MCF 10A (cell line): ENCODE measurements at regions of chr3 and their contacts with region 1.

Region 1: GRCh38 chr3:51391075-51391567 is at the start of gene RBM15B:
- DNase-seq: peak; percentile 95
- H3K4me3 Mint-ChIP-seq: peak within 1 kb of the TSS; percentile 71
- H3K27ac Mint-ChIP-seq: peak within 1 kb of the TSS; percentile 67
- H3K4me1 Mint-ChIP-seq: peaks cover 32% of the 10 kb centered on the region
- H3K27me3 Mint-ChIP-seq: no peaks in the 10 kb centered on the region
- CTCF ChIP-seq: peak; percentile 61
- total RNA-seq, gene RBM15B: 32.5 and 33.6 TPM in 2 replicates

Region 2: GRCh38 chr3:51379301-51379700 is 11.8 kb before region 1 on chr3:
- CTCF ChIA-PET with region 1: interaction called, 19 read pairs
- POLR2A ChIA-PET with region 1: no interaction called
- intact Hi-C with region 1: no loop called
- DNase-seq: no peak
- H3K4me3 Mint-ChIP-seq: no peak overlapping the region
- H3K27ac Mint-ChIP-seq: peak overlapping the region; percentile 28
- H3K4me1 Mint-ChIP-seq: peaks cover 5% of the 10 kb centered on the region
- H3K27me3 Mint-ChIP-seq: no peaks in the 10 kb centered on the region
- CTCF ChIP-seq: no peak

Region 3: DNA sequence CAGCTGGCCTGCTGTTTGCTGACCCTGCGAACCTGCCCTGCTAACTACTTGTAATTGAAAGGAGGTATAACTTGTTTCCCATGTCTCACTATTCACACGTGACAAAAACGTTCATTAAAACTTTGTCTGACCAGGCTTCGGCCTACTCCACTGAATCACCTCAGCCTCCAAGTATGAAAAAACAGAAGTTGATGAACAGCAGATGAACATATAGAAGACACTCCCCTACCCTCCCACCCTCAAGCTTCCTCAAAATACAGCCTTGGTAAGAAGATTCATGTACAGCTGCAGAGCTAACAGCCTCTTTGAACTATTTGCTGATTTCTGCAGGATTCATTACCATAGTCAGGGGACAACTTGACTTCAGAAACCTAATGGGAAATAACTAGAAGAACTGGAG is 10.6 kb after region 1 on chr3:
- CTCF ChIA-PET with region 1: interaction called, 12 read pairs
- POLR2A ChIA-PET with region 1: interaction called, 5 read pairs
- intact Hi-C with region 1: no loop called
- DNase-seq: no peak
- H3K4me3 Mint-ChIP-seq: no peak overlapping the region
- H3K27ac Mint-ChIP-seq: no peak overlapping the region
- H3K4me1 Mint-ChIP-seq: no peaks in the 10 kb centered on the region
- H3K27me3 Mint-ChIP-seq: no peaks in the 10 kb centered on the region
- CTCF ChIP-seq: no peak

Region 4: GRCh38 chr3:51408813-51409212 is 17.7 kb after region 1 on chr3:
- CTCF ChIA-PET with region 1: interaction called, 15 read pairs
- POLR2A ChIA-PET with region 1: no interaction called
- intact Hi-C with region 1: no loop called
- DNase-seq: no peak
- H3K4me3 Mint-ChIP-seq: no peak overlapping the region
- H3K27ac Mint-ChIP-seq: peak overlapping the region; percentile 43
- H3K4me1 Mint-ChIP-seq: no peaks in the 10 kb centered on the region
- H3K27me3 Mint-ChIP-seq: no peaks in the 10 kb centered on the region
- CTCF ChIP-seq: no peak

Region 5: GRCh38 chr3:51682079-51682478 is 291.0 kb after region 1 on chr3:
- CTCF ChIA-PET with region 1: interaction called, 4 read pairs
- POLR2A ChIA-PET with region 1: no interaction called
- intact Hi-C with region 1: loop called (anchors 1 kb)
- DNase-seq: peak; percentile 91
- H3K4me3 Mint-ChIP-seq: no peak overlapping the region
- H3K27ac Mint-ChIP-seq: peak overlapping the region; percentile 35
- H3K4me1 Mint-ChIP-seq: peaks cover 42% of the 10 kb centered on the region
- H3K27me3 Mint-ChIP-seq: no peaks in the 10 kb centered on the region
- CTCF ChIP-seq: peak; percentile 65

Region 6: DNA sequence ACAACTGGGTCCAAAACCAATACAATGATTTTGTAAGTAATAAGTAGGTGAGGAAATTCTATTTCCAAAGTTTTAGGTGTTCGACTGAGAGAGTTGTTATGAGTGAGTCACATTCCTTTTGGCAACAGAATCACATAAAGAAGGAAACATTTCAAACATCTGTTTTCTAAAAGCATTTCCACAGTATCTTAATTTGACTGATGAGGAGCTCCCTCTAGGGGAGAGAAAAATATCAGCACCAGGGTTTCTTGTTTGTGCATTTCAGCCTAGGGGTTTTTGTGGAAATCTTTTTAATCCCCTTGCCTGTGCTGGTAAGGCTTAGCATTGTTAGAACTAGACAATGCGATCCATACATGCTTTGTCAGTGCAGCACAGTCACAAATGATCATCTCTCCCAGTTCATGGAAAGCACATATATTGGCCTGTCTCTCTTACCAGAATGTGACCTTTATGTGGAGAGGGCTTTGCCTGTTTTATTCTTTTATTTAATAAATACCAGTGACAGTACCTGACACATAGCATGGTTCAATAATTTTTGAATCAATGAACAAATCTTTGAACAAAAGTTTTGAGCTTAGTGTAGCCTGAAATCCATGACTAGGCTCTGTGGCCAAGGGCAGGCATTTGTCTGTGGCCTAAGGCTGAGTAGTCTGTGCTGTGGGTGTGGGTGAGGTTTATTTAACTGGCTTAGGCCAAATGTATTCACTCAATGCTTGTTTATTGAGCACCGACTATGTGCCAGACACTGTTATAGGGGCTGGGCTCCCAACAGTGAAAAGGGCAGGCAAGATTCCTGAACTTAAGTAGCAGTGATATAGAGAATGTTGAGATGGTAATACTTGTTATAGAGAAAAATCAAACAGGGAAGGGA is 409.0 kb after region 1 on chr3:
- CTCF ChIA-PET with region 1: interaction called, 4 read pairs
- POLR2A ChIA-PET with region 1: interaction called, 4 read pairs
- intact Hi-C with region 1: loop called (anchors 5 kb)
- DNase-seq: peak; percentile 77
- H3K4me3 Mint-ChIP-seq: no peak overlapping the region
- H3K27ac Mint-ChIP-seq: no peak overlapping the region
- H3K4me1 Mint-ChIP-seq: peaks cover 13% of the 10 kb centered on the region
- H3K27me3 Mint-ChIP-seq: no peaks in the 10 kb centered on the region
- CTCF ChIP-seq: peak; percentile 80